ENCODE measurements at regions of chr6 and their contacts with region 1.

Region 1: GRCh38 chr6:53725791-53726431 is 60.4 kb upstream of the KLHL31 start:
- DNase-seq: peak; percentile 86
- H3K4me3 ChIP-seq: no peak overlapping the region
- H3K27ac ChIP-seq: no peak overlapping the region
- H3K4me1 ChIP-seq: peaks cover 0 to 3% (median 0%) of the 10 kb centered on the region in 4 donors
- H3K27me3 ChIP-seq: no peaks in the 10 kb centered on the region
- CTCF ChIP-seq: peak; percentile 69 to 95 (median 84)
- EP300 ChIP-seq: no peak
- POLR2A ChIP-seq: no peak

Region 2: DNA sequence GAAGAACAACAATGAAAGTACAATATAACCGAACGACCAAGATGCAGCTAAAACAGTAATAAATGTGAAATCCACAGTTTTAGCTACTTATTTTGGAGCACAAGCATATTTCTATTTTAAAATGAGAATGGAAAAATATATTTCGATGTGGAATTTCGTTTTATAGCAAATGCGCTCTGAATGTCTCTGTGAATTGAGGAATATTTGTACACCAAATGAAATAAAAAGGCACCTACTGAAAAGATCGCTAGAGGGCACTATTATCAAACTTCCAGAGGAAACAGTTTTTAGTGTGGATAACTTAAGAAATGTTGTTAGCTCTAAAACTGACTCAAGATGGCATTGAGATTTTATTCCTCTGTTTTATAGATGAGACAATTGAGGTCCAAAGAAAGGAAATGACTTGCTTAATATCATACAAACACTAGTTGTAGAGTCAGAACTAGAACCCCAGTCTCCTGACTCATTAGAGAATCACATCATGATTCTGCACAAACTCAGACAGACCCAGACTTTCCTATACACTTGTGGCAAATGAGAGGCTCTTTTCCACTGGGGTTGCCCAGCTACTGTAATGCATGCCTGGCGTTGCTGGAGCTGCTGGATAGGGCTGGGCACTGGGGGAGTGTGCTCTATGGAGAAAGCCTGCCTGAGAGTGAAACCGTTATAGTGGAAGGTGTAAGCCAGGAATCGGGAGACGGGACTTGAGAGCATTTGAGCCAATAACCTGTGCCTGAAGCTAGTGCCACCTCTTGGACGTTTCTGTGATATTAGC is 232.9 kb before region 1 on chr6:
- intact Hi-C with region 1: loop called (anchors 2 kb)
- DNase-seq: no peak
- H3K4me3 ChIP-seq: peak overlapping the region in 3 of 4 donors; percentile 12 to 20 (median 12)
- H3K27ac ChIP-seq: peak overlapping the region in 2 of 4 donors; percentile 32 to 52
- H3K4me1 ChIP-seq: peaks cover 0 to 39% (median 25%) of the 10 kb centered on the region in 4 donors
- H3K27me3 ChIP-seq: no peaks in the 10 kb centered on the region
- CTCF ChIP-seq: peak; percentile 50 to 72 (median 65)
- EP300 ChIP-seq: no peak
- POLR2A ChIP-seq: no peak

Region 3: DNA sequence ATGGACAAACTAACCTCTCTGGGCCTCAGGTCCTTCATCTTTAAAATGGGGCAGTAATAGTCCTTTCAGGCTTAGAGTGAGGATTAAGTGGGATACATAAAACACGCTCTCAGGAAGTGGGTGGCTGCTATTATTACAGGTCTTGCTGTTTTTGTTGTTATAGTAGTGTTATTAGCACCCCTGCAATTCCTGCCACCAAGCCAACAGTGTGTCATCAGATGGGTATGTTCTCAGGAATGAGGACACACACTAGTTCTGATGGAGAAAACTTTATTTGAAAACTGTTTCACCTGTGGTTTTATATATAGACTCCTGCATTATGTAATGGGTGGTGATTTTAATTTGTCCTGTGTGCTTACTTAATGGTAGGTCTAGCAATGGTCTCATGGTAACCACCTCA is 200.6 kb after region 1 on chr6:
- intact Hi-C with region 1: no loop called
- DNase-seq: no peak
- H3K4me3 ChIP-seq: no peak overlapping the region
- H3K27ac ChIP-seq: peak overlapping the region in 1 of 4 donors; percentile 29
- H3K4me1 ChIP-seq: peaks cover 0 to 25% (median 10%) of the 10 kb centered on the region in 4 donors
- H3K27me3 ChIP-seq: no peaks in the 10 kb centered on the region
- CTCF ChIP-seq: no peak
- EP300 ChIP-seq: no peak
- POLR2A ChIP-seq: no peak

Measured in sigmoid colon (tissue), 7 donors.